AG04450 (cell line): ENCODE measurements at regions of chr12 and their contacts with region 1.

Region 1: GRCh38 chr12:57238854-57239554 is 9.5 kb downstream of the SHMT2 start:
- DNase-seq: peak; percentile 72
- H3K4me3 ChIP-seq: peak overlapping the region; percentile 68
- H3K27ac ChIP-seq: peak overlapping the region; percentile 89
- H3K27me3 ChIP-seq: peaks cover 20% of the 10 kb centered on the region
- CTCF ChIP-seq: peak; percentile 100

Region 2: GRCh38 chr12:57213058-57213715 is 25.8 kb before region 1 on chr12:
- CTCF ChIA-PET with region 1: interaction called, 161 read pairs
- POLR2A ChIA-PET with region 1: interaction called, 4 read pairs
- DNase-seq: peak; percentile 65
- H3K4me3 ChIP-seq: no peak overlapping the region
- H3K27ac ChIP-seq: peak overlapping the region; percentile 11
- H3K27me3 ChIP-seq: peaks cover 28% of the 10 kb centered on the region
- CTCF ChIP-seq: peak; percentile 96

Region 3: GRCh38 chr12:57248934-57249742 is 10.1 kb after region 1 on chr12:
- CTCF ChIA-PET with region 1: interaction called, 18 read pairs
- POLR2A ChIA-PET with region 1: no interaction called
- DNase-seq: no peak
- H3K4me3 ChIP-seq: no peak overlapping the region
- H3K27ac ChIP-seq: no peak overlapping the region
- H3K27me3 ChIP-seq: no peaks in the 10 kb centered on the region
- CTCF ChIP-seq: no peak

Region 4: DNA sequence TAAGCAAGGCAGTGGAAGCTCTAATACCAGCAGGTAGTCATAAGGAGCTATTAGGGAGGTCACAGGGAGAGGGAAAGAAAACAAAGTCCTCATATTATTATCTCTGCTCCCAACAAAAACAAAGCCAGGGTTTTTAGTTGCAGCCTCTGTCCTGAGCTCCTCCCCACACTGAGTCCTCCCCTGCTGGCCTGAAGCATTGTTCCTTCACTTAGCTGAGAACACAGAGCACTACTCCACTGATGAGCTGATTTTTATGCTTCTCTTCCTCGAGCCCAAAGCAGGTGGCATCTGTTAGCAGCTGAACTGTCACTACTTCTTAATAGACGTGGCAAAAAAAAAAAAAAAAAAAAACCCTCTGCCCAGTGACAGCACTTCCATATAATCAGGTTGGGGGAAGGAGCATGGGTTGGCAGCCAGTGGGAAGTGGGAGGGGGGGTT is 22.4 kb after region 1 on chr12:
- CTCF ChIA-PET with region 1: interaction called, 10 read pairs
- POLR2A ChIA-PET with region 1: no interaction called
- DNase-seq: no peak
- H3K4me3 ChIP-seq: no peak overlapping the region
- H3K27ac ChIP-seq: no peak overlapping the region
- H3K27me3 ChIP-seq: no peaks in the 10 kb centered on the region
- CTCF ChIP-seq: no peak

Region 5: GRCh38 chr12:57419495-57419894 is 180.5 kb after region 1 on chr12:
- CTCF ChIA-PET with region 1: no interaction called
- POLR2A ChIA-PET with region 1: no interaction called
- DNase-seq: no peak
- H3K4me3 ChIP-seq: no peak overlapping the region
- H3K27ac ChIP-seq: no peak overlapping the region
- H3K27me3 ChIP-seq: no peaks in the 10 kb centered on the region
- CTCF ChIP-seq: no peak